ENCODE measurements at regions of chr6 and their contacts with region 1.

Region 1: GRCh38 chr6:144013486-144013909 is 5.4 kb upstream of the PLAGL1 start:
- H3K4me3 ChIP-seq: no peak overlapping the region
- H3K27ac ChIP-seq: no peak overlapping the region
- H3K4me1 ChIP-seq: no peaks in the 10 kb centered on the region
- CTCF ChIP-seq: peak; percentile 65

Region 2: GRCh38 chr6:143505111-143505510 is 508.4 kb before region 1 on chr6:
- CTCF ChIA-PET with region 1: interaction called, 10 read pairs
- POLR2A ChIA-PET with region 1: no interaction called
- H3K4me3 ChIP-seq: no peak overlapping the region
- H3K27ac ChIP-seq: no peak overlapping the region
- H3K4me1 ChIP-seq: no peaks in the 10 kb centered on the region
- CTCF ChIP-seq: no peak

Measured in HEK293 (cell line).